IMR-90 (cell line): ENCODE measurements at regions of chr5 and their contacts with region 1.

Region 1: GRCh38 chr5:111122398-111122797 is 30.2 kb downstream of the WDR36 start:
- DNase-seq: no peak
- ATAC-seq: no peak
- H3K4me3 ChIP-seq: no peak overlapping the region
- H3K27ac ChIP-seq: no peak overlapping the region
- H3K4me1 ChIP-seq: no peaks in the 10 kb centered on the region
- H3K27me3 ChIP-seq: no peaks in the 10 kb centered on the region
- CTCF ChIP-seq: no peak
- POLR2A ChIP-seq: no peak
- RAD21 ChIP-seq: no peak

Region 2: DNA sequence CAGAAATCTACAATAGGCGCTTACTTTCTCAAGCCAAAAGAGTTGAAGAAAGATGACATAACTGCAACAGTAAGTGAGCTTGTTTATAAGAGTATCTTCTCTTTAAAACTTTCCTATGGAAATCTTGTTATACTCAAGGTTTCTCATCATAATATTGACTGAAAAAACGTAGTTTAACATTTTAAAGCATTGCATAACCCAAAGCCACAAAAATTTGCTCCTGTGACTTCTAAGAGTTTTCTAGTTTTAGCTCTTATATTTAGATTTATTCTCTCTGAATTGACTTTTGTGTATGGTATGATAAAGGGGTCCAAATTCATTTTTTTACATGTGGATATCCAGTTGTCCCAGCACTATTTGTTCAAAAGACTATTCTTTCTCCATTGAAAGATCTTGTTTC is 15.0 kb before region 1 on chr5:
- CTCF ChIA-PET with region 1: interaction called, 3 read pairs
- POLR2A ChIA-PET with region 1: no interaction called
- dilution Hi-C with region 1: no loop called
- in situ Hi-C with region 1: no loop called
- intact Hi-C with region 1: loop called (anchors 2 kb)
- DNase-seq: peak; percentile 35
- ATAC-seq: no peak; the same call in 1 of the 2 replicates
- H3K4me3 ChIP-seq: no peak overlapping the region
- H3K27ac ChIP-seq: no peak overlapping the region
- H3K4me1 ChIP-seq: no peaks in the 10 kb centered on the region
- H3K27me3 ChIP-seq: no peaks in the 10 kb centered on the region
- CTCF ChIP-seq: no peak
- POLR2A ChIP-seq: no peak
- RAD21 ChIP-seq: no peak